ENCODE measurements at regions of chr2 and their contacts with region 1.

Region 1: DNA sequence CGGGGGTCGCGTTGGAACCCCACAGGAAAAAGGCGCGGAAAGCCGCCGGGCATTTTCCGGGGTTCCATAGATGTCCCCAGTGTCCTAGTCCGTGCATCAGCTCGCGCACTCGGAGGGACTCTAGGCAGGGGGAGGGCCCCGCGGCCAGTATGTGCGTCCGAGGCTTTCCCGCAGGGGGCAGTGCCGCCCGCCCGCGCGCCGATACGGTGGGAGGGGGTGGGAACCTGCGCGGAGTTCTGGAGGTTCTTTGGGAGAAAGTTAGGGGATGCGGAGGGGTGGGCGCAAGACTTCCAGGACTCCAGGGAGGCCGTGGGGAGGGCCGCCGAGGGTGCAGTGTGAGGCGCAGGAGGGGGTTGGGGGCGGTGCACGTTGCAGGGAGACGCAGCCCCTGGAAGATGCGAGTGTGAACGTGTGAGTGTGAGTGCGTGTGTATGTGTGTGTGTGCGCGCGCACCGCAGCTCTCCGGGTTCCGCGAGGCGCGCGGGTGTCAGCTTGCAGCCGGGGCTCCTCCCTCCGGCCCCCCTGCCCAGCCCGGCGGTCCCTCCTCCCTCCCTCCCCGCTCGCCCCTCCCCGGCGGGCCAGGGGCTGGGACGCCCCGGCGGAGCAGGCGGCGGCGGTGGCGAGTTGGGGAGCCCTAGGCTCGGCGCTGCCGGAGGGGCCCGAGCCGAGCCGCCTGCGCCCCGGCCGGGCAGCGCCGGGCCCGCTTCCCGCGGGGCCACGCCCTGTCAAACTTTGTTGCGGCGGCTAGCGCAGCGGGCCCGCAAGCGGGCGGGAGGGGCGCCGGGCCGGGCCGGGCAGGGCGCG is at the start of gene TCF7L1:
- DNase-seq: peak; percentile 84 to 94
- H3K4me3 ChIP-seq: peak within 1 kb of the TSS; percentile 95
- H3K4me3 Mint-ChIP-seq: peak within 1 kb of the TSS; percentile 95
- H3K27ac Mint-ChIP-seq: peak within 1 kb of the TSS; percentile 79
- H3K4me1 ChIP-seq: peaks cover 21% of the 10 kb centered on the region
- H3K4me1 Mint-ChIP-seq: no peaks in the 10 kb centered on the region
- H3K27me3 ChIP-seq: no peaks in the 10 kb centered on the region
- H3K27me3 Mint-ChIP-seq: no peaks in the 10 kb centered on the region
- CTCF ChIP-seq: peak; percentile 93 to 97
- total RNA-seq, gene TCF7L1: 27.7 and 29.0 TPM in 2 replicates

Region 2: DNA sequence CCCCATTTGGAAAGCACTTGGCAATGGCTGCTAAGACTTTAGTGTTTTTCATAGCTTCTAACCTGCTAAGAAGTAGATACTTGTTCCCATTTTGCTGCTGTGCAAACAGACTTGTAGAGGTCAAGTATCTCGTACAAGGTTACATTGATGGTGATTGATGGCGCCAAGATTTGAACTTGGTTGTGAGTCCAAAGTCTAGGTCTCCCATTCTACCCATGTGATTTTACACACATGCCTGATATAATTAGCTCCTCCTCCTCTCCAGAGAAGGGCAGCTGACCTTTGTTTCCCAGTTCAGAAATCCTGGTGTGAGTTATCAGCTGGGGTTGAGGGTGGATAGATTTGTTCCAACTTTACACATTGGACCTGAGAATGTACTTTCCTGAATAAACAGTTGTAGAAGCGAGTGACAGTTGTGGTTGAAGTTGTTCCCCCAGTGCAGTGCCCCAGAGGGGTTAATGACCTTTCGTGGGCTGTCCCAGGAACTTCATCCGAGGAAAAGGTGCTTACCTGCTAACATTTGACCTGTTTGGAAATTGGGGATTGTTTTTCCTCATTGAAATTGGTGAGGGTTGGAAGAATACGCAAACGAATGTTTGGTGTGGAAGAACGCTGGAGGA is 10.5 kb after region 1 on chr2:
- CTCF ChIA-PET with region 1: interaction called, 10 read pairs
- POLR2A ChIA-PET with region 1: interaction called, 4 read pairs
- intact Hi-C with region 1: no loop called
- DNase-seq: peak; percentile 43 to 59
- H3K4me3 ChIP-seq: no peak overlapping the region
- H3K4me3 Mint-ChIP-seq: peak overlapping the region; percentile 13
- H3K27ac Mint-ChIP-seq: peak overlapping the region; percentile 19
- H3K4me1 ChIP-seq: peaks cover 23% of the 10 kb centered on the region
- H3K4me1 Mint-ChIP-seq: peaks cover 16% of the 10 kb centered on the region
- H3K27me3 ChIP-seq: no peaks in the 10 kb centered on the region
- H3K27me3 Mint-ChIP-seq: no peaks in the 10 kb centered on the region
- CTCF ChIP-seq: no peak

Region 3: GRCh38 chr2:85243101-85244072 is 110.4 kb after region 1 on chr2:
- CTCF ChIA-PET with region 1: interaction called, 5 read pairs
- POLR2A ChIA-PET with region 1: no interaction called
- intact Hi-C with region 1: loop called (anchors 1 kb)
- DNase-seq: peak; percentile 50 to 68
- H3K4me3 ChIP-seq: no peak overlapping the region
- H3K4me3 Mint-ChIP-seq: no peak overlapping the region
- H3K27ac Mint-ChIP-seq: no peak overlapping the region
- H3K4me1 ChIP-seq: peaks cover under 1% of the 10 kb centered on the region; the same call in 1 of the 2 replicates
- H3K4me1 Mint-ChIP-seq: peaks cover 16% of the 10 kb centered on the region
- H3K27me3 ChIP-seq: no peaks in the 10 kb centered on the region
- H3K27me3 Mint-ChIP-seq: no peaks in the 10 kb centered on the region
- CTCF ChIP-seq: peak; percentile 39 to 61

Region 4: GRCh38 chr2:85288244-85288725 is 155.2 kb after region 1 on chr2:
- CTCF ChIA-PET with region 1: interaction called, 18 read pairs
- POLR2A ChIA-PET with region 1: interaction called, 3 read pairs
- intact Hi-C with region 1: loop called (anchors 1 kb)
- DNase-seq: peak; percentile 55 to 61
- H3K4me3 ChIP-seq: no peak overlapping the region
- H3K4me3 Mint-ChIP-seq: peak overlapping the region; percentile 10
- H3K27ac Mint-ChIP-seq: peak overlapping the region; percentile 63
- H3K4me1 ChIP-seq: peaks cover 16% of the 10 kb centered on the region
- H3K4me1 Mint-ChIP-seq: peaks cover 24% of the 10 kb centered on the region
- H3K27me3 ChIP-seq: no peaks in the 10 kb centered on the region
- H3K27me3 Mint-ChIP-seq: no peaks in the 10 kb centered on the region
- CTCF ChIP-seq: no peak

Measured in Caco-2 (cell line).